ENCODE measurements at regions of chr11 and their contacts with region 1.

Region 1: GRCh38 chr11:47071791-47072261 is 104.9 kb downstream of the ARFGAP2 start:
- DNase-seq: no peak
- ATAC-seq: no peak
- H3K4me3 Mint-ChIP-seq: no peak overlapping the region
- H3K27ac Mint-ChIP-seq: no peak overlapping the region
- H3K4me1 Mint-ChIP-seq: no peaks in the 10 kb centered on the region
- H3K27me3 Mint-ChIP-seq: no peaks in the 10 kb centered on the region
- CTCF ChIP-seq: no peak

Region 2: DNA sequence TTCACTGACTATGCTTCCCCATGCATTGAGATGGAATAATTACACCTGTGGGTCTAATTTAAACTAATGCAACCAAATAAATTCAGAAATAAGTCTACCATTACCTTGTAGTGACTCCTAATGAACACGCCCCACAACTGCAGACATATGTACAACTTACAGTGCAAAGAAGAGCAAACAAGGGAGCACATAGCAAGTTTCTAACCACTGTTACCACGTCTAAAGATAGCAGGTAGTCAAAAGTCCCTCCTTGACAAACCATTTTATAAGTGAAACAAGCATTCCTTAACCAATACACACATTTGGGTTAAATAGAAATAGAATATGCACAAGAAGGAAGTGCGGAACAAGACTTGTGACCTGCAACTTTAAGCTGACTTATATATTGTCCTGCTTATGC is 971.2 kb before region 1 on chr11:
- CTCF ChIA-PET with region 1: no interaction called
- POLR2A ChIA-PET with region 1: no interaction called
- intact Hi-C with region 1: no loop called
- DNase-seq: no peak
- ATAC-seq: peak; percentile 21
- H3K4me3 Mint-ChIP-seq: peak overlapping the region; percentile 24
- H3K27ac Mint-ChIP-seq: peak overlapping the region; percentile 37
- H3K4me1 Mint-ChIP-seq: peaks cover 38% of the 10 kb centered on the region
- H3K27me3 Mint-ChIP-seq: no peaks in the 10 kb centered on the region
- CTCF ChIP-seq: no peak

Region 3: GRCh38 chr11:47055534-47055933 is 16.3 kb before region 1 on chr11:
- CTCF ChIA-PET with region 1: no interaction called
- POLR2A ChIA-PET with region 1: no interaction called
- intact Hi-C with region 1: loop called (anchors 1 kb)
- DNase-seq: no peak
- ATAC-seq: no peak
- H3K4me3 Mint-ChIP-seq: no peak overlapping the region
- H3K27ac Mint-ChIP-seq: no peak overlapping the region
- H3K4me1 Mint-ChIP-seq: no peaks in the 10 kb centered on the region
- H3K27me3 Mint-ChIP-seq: no peaks in the 10 kb centered on the region
- CTCF ChIP-seq: no peak

Region 4: DNA sequence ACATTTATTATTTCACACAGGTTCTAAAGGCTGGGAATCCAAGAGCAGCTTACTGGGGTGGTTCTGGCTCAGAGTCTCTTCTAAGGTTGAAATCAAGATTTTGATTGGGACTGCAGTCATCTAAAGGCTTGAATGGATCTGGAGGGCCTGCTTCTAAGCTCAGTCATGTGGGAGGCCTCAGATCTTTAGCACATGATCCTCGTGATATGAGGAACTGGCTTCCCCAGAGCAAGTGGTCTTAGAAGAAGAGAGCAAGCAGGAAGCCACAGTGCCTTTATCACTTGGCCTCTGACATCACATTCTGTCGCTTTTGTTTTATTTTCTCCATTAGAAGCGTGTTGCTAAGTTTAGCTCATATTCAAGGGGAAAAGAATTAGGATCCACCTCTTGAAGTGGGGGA is 16.0 kb after region 1 on chr11:
- CTCF ChIA-PET with region 1: no interaction called
- POLR2A ChIA-PET with region 1: no interaction called
- intact Hi-C with region 1: no loop called
- DNase-seq: no peak
- ATAC-seq: no peak
- H3K4me3 Mint-ChIP-seq: no peak overlapping the region
- H3K27ac Mint-ChIP-seq: no peak overlapping the region
- H3K4me1 Mint-ChIP-seq: no peaks in the 10 kb centered on the region
- H3K27me3 Mint-ChIP-seq: no peaks in the 10 kb centered on the region
- CTCF ChIP-seq: no peak

Measured in activated B cell treated with CpG ODN at 0.5 μM for 24 hours (primary cell).